Panc1 (cell line): ENCODE measurements at regions of chr6 and their contacts with region 1.

Region 1: DNA sequence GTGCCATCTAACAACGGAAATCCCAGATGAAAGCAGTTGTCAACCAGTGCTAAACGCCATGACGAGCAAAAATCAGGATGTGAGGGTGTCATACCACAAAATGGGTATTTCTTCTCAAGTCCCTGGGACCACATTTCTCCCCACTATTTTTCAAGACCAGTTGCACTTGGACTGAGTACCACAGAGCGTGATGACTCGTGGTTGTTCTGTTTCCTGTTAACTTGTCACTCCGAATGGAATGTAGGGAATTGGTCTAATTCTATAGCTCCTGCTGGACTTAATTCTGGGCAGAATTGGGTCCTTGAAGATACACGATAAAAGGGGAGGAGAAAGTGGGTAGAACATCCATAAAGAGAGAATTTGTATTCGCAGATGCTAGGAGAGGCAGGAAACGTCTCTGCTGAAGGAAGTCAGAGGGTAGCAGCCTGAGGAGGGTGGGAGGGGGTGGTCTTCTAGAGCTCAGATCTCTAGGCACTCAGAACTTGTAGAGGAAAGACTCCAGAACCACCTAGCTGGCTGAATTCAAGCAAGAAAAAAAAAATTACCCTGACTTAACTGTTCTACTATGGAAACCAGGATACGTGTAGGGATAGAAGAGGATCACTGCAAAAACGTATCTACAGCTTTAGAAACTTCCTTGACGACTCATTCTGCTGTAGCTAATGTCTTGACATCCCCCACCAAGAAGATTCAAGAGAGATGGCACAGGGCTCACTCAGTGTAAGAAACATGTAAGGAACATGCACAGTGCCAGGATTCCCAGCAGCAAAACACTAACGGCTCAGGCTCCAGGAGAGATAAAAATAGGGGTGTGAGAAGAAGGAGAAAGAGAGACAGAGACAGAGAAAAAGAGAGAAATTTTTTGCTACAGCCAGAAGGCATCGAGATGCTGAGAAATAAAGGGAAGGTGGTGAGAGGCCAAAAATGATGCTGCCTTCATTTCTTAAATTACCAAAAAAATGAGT is 494.7 kb downstream of the CD83 start:
- DNase-seq: no peak
- ATAC-seq: no peak
- H3K4me3 ChIP-seq: no peak overlapping the region
- H3K27ac ChIP-seq: no peak overlapping the region
- H3K4me1 ChIP-seq: no peaks in the 10 kb centered on the region
- H3K27me3 ChIP-seq: no peaks in the 10 kb centered on the region
- CTCF ChIP-seq: no peak

Region 2: DNA sequence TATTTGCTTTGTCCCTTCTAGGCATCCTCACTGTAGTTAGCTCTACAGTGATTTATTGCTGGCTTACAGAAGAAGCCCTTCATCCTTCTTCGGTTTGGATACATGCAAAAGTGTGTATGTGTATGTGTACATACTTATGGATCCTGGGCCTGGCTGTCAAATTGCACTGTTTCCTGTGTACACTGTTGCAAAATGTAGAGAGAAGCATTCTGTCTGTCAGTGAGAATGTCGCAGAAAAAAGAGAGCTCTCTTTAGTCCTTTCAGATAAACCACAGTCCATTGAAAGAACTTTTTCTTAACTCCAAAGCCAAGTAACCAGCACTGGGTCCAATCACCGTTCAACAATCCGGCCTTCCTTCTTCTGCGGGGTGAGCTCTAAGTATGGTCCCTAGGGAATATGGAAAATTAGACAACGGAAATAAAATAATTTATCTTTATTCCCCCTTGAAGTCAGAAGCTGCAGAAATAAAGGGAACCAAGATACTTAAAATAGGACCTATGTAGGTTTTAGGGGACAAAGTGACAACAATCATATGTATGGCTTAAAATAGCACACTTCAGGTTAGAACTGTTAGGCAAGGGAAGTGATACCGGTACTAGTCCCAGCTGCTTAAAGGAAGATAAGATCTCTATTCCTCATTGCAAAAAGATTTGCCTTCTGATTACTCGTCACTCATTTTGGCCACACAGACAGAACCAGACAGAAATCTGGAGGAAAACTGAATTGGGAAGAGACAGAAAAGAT is 387.8 kb before region 1 on chr6:
- CTCF ChIA-PET with region 1: no interaction called
- POLR2A ChIA-PET with region 1: no interaction called
- in situ Hi-C with region 1: no loop called
- intact Hi-C with region 1: no loop called
- DNase-seq: no peak
- ATAC-seq: no peak
- H3K4me3 ChIP-seq: no peak overlapping the region
- H3K27ac ChIP-seq: no peak overlapping the region
- H3K4me1 ChIP-seq: no peaks in the 10 kb centered on the region
- H3K27me3 ChIP-seq: peaks cover 2% of the 10 kb centered on the region
- CTCF ChIP-seq: no peak

Region 3: GRCh38 chr6:14865531-14866100 is 253.3 kb after region 1 on chr6:
- CTCF ChIA-PET with region 1: no interaction called
- POLR2A ChIA-PET with region 1: no interaction called
- in situ Hi-C with region 1: no loop called
- intact Hi-C with region 1: no loop called
- DNase-seq: no peak
- ATAC-seq: no peak
- H3K4me3 ChIP-seq: no peak overlapping the region
- H3K27ac ChIP-seq: no peak overlapping the region
- H3K4me1 ChIP-seq: no peaks in the 10 kb centered on the region
- H3K27me3 ChIP-seq: no peaks in the 10 kb centered on the region
- CTCF ChIP-seq: no peak

Region 4: DNA sequence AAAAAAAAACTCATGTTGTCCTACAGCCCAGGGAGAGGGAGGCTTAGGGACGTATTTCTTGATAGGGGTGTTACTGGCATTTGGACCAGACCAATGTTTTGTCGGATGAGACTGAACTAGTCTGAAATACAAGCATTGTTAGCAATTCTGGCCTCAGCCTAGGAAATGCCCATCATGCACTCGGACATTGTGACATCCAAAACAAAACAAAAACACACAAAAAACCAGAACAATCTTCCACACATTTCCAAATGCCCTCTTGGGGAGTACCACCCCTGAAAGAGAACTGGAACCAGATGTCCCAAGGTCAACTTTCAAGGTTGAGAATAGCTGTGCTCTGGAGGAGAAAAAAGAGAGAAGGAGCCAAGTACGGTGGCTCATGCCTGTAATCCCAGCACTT is 334.5 kb after region 1 on chr6:
- CTCF ChIA-PET with region 1: no interaction called
- POLR2A ChIA-PET with region 1: interaction called, 15 read pairs
- in situ Hi-C with region 1: no loop called
- intact Hi-C with region 1: no loop called
- DNase-seq: no peak
- ATAC-seq: no peak
- H3K4me3 ChIP-seq: no peak overlapping the region
- H3K27ac ChIP-seq: no peak overlapping the region
- H3K4me1 ChIP-seq: no peaks in the 10 kb centered on the region
- H3K27me3 ChIP-seq: no peaks in the 10 kb centered on the region
- CTCF ChIP-seq: no peak